GM12878 (cell line): ENCODE measurements at regions of chr1 and their contacts with region 1.

Region 1: GRCh38 chr1:221839796-221840395 is 98.0 kb upstream of the DUSP10 start:
- DNase-seq: peak; percentile 94
- ATAC-seq: peak; percentile 93
- H3K4me3 ChIP-seq: no peak overlapping the region
- H3K27ac ChIP-seq: peak overlapping the region; percentile 45; the same call in 1 of the 2 replicates
- H3K4me1 ChIP-seq: peaks cover 42% of the 10 kb centered on the region
- H3K27me3 ChIP-seq: no peaks in the 10 kb centered on the region
- CTCF ChIP-seq: no peak
- EP300 ChIP-seq: peak; percentile 97
- POLR2A ChIP-seq: no peak
- RAD21 ChIP-seq: no peak

Region 2: DNA sequence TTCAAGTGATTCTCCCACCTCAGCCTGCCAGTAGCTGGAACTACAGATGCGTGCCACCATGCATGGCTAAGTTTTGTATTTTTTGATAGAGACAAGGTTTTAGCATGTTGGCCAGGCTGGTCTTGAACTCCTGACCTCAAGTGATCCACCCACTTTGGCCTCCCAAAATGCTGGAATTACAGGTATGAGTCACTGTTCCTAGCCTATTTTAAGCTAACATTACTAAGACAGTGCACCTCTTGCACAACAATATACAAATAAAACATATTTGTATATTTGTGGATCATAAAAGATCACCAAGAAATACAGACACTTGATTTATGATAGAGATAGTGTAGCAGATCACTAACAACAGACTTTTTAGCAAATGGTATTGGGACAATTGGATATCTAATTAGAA is 237.0 kb before region 1 on chr1:
- CTCF ChIA-PET with region 1: no interaction called
- POLR2A ChIA-PET with region 1: no interaction called
- RAD21 ChIA-PET with region 1: no interaction called
- SMC1A ChIA-PET with region 1: no interaction called
- in situ Hi-C with region 1: no loop called
- intact Hi-C with region 1: no loop called
- DNase-seq: no peak
- ATAC-seq: no peak
- H3K4me3 ChIP-seq: no peak overlapping the region
- H3K27ac ChIP-seq: no peak overlapping the region
- H3K4me1 ChIP-seq: no peaks in the 10 kb centered on the region
- H3K27me3 ChIP-seq: no peaks in the 10 kb centered on the region
- CTCF ChIP-seq: no peak
- EP300 ChIP-seq: no peak
- POLR2A ChIP-seq: no peak
- RAD21 ChIP-seq: no peak

Region 3: GRCh38 chr1:221753828-221754188 is 86.1 kb before region 1 on chr1:
- CTCF ChIA-PET with region 1: interaction called, 4 read pairs
- POLR2A ChIA-PET with region 1: interaction called, 3 read pairs
- RAD21 ChIA-PET with region 1: interaction called, 11 read pairs
- SMC1A ChIA-PET with region 1: interaction called, 10 read pairs
- in situ Hi-C with region 1: loop called (anchors 5 kb)
- intact Hi-C with region 1: no loop called
- DNase-seq: no peak
- ATAC-seq: peak; percentile 58
- H3K4me3 ChIP-seq: no peak overlapping the region
- H3K27ac ChIP-seq: peak overlapping the region; percentile 73
- H3K4me1 ChIP-seq: peaks cover 49% of the 10 kb centered on the region
- H3K27me3 ChIP-seq: no peaks in the 10 kb centered on the region
- CTCF ChIP-seq: no peak
- EP300 ChIP-seq: no peak
- POLR2A ChIP-seq: no peak
- RAD21 ChIP-seq: no peak

Region 4: DNA sequence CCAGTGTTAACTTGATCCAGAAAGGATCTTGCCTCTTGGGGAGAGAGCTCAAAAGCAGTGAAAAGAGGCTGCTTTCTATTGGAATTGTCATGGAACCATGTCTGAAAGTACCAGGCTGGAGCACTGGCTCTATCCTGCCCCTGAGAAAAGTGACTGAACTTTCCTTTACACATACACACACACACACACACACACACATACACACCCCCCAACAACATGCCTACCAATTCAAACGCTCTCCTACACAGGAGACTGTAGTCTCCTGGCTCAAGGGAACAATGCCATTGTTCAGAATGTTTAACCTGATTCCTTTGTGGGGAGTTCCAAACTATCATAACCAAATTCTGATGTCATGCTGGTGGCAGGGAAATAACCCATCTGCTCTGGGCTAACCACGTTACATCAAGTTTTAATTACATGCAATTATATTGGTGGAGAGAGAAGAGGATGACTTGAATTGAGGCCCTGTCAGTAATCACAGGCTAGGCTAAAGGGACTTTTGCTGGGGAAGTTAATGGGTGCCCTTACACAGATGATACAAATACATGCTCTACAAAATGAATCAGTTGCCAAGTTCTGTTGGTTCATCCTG is 45.7 kb before region 1 on chr1:
- CTCF ChIA-PET with region 1: interaction called, 3 read pairs
- POLR2A ChIA-PET with region 1: interaction called, 4 read pairs
- RAD21 ChIA-PET with region 1: interaction called, 29 read pairs
- SMC1A ChIA-PET with region 1: interaction called, 7 read pairs
- in situ Hi-C with region 1: no loop called
- intact Hi-C with region 1: loop called (anchors 1 kb)
- DNase-seq: peak; percentile 82
- ATAC-seq: peak; percentile 90
- H3K4me3 ChIP-seq: no peak overlapping the region
- H3K27ac ChIP-seq: peak overlapping the region; percentile 69
- H3K4me1 ChIP-seq: peaks cover 25% of the 10 kb centered on the region
- H3K27me3 ChIP-seq: no peaks in the 10 kb centered on the region
- CTCF ChIP-seq: no peak
- EP300 ChIP-seq: peak; percentile 88 to 93; a peak in 3 of 4 replicates
- POLR2A ChIP-seq: no peak; the same call in 1 of the 2 replicates
- RAD21 ChIP-seq: no peak

Region 5: GRCh38 chr1:221878134-221878533 is 38.2 kb after region 1 on chr1:
- CTCF ChIA-PET with region 1: interaction called, 5 read pairs
- POLR2A ChIA-PET with region 1: no interaction called
- RAD21 ChIA-PET with region 1: interaction called, 4 read pairs
- SMC1A ChIA-PET with region 1: interaction called, 6 read pairs
- in situ Hi-C with region 1: no loop called
- intact Hi-C with region 1: loop called (anchors 2 kb)
- DNase-seq: peak; percentile 45
- ATAC-seq: peak; percentile 78
- H3K4me3 ChIP-seq: no peak overlapping the region
- H3K27ac ChIP-seq: peak overlapping the region; percentile 18; the same call in 1 of the 2 replicates
- H3K4me1 ChIP-seq: peaks cover 22% of the 10 kb centered on the region
- H3K27me3 ChIP-seq: no peaks in the 10 kb centered on the region
- CTCF ChIP-seq: no peak
- EP300 ChIP-seq: peak; percentile 54 to 86; a peak in 2 of 4 replicates
- POLR2A ChIP-seq: no peak
- RAD21 ChIP-seq: no peak

Region 6: DNA sequence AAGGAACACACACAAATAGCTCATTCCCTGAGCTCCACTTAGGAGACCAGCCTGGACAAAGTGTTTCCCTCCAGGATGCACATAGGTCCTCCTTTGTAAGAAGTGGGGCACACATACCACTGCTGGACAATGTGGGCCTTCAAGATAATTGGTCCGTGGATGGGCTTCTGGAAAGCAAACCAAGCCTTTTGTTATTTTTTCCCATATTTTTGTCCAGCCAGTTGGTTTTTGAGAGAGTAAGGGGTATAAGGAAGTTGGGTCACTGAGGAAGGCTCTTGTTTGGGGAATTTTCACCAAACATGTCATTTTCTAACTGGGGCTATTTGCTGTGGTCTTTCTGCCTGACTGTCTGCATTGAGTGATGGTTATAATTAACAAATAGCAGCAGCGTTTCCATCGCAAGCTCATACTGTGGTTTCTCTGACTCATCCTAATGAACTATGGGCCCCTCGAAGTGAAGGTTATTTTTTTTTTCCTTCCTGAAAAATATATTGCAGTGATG is 208.2 kb after region 1 on chr1:
- CTCF ChIA-PET with region 1: interaction called, 3 read pairs
- POLR2A ChIA-PET with region 1: no interaction called
- RAD21 ChIA-PET with region 1: interaction called, 3 read pairs
- SMC1A ChIA-PET with region 1: interaction called, 10 read pairs
- in situ Hi-C with region 1: no loop called
- intact Hi-C with region 1: no loop called
- DNase-seq: peak; percentile 54
- ATAC-seq: peak; percentile 94
- H3K4me3 ChIP-seq: no peak overlapping the region
- H3K27ac ChIP-seq: peak overlapping the region; percentile 58
- H3K4me1 ChIP-seq: peaks cover 5% of the 10 kb centered on the region
- H3K27me3 ChIP-seq: no peaks in the 10 kb centered on the region
- CTCF ChIP-seq: no peak
- EP300 ChIP-seq: peak; percentile 63 to 88; a peak in 3 of 4 replicates
- POLR2A ChIP-seq: no peak
- RAD21 ChIP-seq: no peak